Lower leg skin (tissue), 4 donors: ENCODE measurements at regions of chr17 and their contacts with region 1.

Region 1: GRCh38 chr17:1365445-1366039 is 34.5 kb downstream of the YWHAE start:
- DNase-seq: peak in 1 of 2 donors; percentile 67
- H3K4me3 ChIP-seq: no peak overlapping the region
- CTCF ChIP-seq: peak in 1 of 3 donors; percentile 38
- POLR2A ChIP-seq: no peak

Region 2: GRCh38 chr17:1516388-1517161 is 151.0 kb after region 1 on chr17 and contains the start of gene INPP5K:
- intact Hi-C with region 1: loop called (anchors 10 kb)
- DNase-seq: peak; percentile 98 to 99
- H3K4me3 ChIP-seq: peak within 1 kb of the TSS; percentile 94
- CTCF ChIP-seq: no peak
- POLR2A ChIP-seq: no peak
- total RNA-seq, gene INPP5K: 101 to 172 (median 134) TPM

Region 3: DNA sequence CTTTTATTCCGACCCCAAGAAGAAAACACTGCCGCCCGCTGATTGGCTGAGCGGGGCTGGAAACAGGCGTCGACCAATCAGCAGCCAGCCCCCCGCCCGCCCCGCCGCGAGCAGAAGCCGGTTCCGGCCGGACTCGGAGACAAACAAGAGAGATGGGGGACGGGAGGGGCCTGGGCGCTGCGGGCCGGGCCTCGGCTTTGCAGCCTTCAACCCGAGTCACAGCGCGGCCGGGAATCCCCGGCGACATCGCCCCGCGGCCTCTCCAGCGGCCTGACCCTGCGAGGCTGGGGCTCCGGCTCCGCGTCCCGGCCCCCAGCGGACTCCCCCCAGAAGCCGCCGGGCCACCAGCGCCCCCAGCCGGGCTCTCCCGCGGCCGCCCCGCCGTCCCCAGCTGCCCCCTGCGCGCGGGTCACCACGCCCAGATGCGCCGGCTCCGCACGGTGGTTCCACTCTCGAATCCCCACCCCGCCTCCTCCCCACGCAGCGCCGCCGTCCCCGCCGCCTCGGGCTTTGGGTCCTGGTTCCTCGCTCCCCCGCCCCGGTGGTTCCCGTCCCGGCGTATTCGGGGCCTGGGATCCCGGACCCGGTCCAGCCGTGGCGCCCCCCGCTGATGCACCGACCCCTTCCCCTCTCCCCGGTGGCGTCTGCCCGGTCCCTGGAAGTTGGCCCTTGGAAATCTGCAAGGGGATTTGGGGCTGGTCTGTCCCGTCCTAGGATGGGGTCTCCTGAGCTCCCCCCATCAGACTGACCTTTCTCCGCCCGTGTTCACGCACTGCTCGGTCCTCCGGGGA is 263.5 kb after region 1 on chr17:
- intact Hi-C with region 1: loop called (anchors 10 kb)
- DNase-seq: peak; percentile 94 to 99
- H3K4me3 ChIP-seq: peak overlapping the region; percentile 57
- CTCF ChIP-seq: no peak
- POLR2A ChIP-seq: no peak